ENCODE measurements at regions of chr1 and their contacts with region 1.

Region 1: DNA sequence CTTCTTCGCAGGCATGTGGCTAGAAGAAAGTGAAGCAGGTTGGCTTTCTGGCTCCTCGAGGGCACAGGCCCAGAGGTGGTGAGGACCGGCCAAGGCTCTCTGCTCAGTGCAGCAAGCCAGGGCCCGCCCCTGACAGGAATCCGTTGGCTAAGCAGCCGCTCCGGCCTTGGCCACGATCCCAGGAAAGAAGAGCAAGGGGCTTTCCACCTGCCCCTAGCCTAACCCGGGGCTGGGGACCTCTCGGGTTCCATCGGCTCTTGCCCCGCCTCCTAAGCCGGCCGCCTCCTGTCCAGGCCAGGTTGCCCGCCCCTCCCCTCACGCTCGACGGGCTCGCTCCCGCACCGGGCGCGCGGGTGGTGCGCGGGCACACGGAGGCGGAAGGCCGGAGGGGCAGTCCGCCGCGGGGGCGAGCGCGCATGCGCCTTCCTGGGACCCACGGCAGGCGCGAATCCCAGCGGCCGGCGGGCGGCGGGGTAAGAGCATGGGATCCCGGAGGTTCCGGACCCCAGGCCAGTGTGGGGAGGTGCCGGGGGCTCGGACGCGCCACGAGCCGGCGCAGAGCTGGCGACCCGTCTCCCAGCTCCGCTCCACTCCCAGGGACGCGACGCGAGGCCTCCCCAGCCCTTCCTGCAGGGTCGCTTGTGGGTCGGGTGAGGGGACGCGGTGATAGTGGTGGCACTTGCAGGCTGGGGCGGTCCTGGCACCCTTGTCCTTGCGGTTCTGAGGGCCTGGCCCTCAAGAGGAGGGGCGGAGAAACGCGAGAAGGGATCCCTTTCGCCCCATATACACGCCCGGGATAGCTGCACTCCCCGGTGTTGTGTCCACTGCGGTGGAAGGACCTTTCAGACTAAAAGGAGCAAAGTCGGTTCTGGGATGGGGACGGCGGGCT is at the start of gene ALG6:
- DNase-seq: peak; percentile 95
- H3K4me3 ChIP-seq: peak within 1 kb of the TSS; percentile 29 to 92 (median 65)
- H3K27ac ChIP-seq: no peak within 1 kb of the TSS
- H3K4me1 ChIP-seq: peaks cover 10% of the 10 kb centered on the region
- H3K27me3 ChIP-seq: no peaks in the 10 kb centered on the region
- CTCF ChIP-seq: no peak
- POLR2A ChIP-seq: peak; percentile 88
- total RNA-seq, gene ALG6: 14.4 and 17.3 TPM in 2 replicates

Region 2: GRCh38 chr1:63522891-63523728 is 155.7 kb after region 1 on chr1 and contains the starts of genes EFCAB7 and ITGB3BP:
- CTCF ChIA-PET with region 1: no interaction called
- POLR2A ChIA-PET with region 1: no interaction called
- dilution Hi-C with region 1: no loop called
- intact Hi-C with region 1: loop called (anchors 1 kb)
- DNase-seq: peak; percentile 91
- H3K4me3 ChIP-seq: peak within 1 kb of the TSS; percentile 55 to 95 (median 75)
- H3K27ac ChIP-seq: peak within 1 kb of the TSS; percentile 82
- H3K4me1 ChIP-seq: peaks cover 13% of the 10 kb centered on the region
- H3K27me3 ChIP-seq: no peaks in the 10 kb centered on the region
- CTCF ChIP-seq: no peak
- POLR2A ChIP-seq: peak; percentile 72
- total RNA-seq, gene EFCAB7: 6.1 and 7.1 TPM in 2 replicates
- total RNA-seq, gene ITGB3BP: 24.4 and 26.6 TPM in 2 replicates

Region 3: GRCh38 chr1:63615768-63616420 is 248.4 kb after region 1 on chr1:
- CTCF ChIA-PET with region 1: no interaction called
- POLR2A ChIA-PET with region 1: no interaction called
- dilution Hi-C with region 1: no loop called
- intact Hi-C with region 1: no loop called
- DNase-seq: peak; percentile 82
- H3K4me3 ChIP-seq: no peak overlapping the region
- H3K27ac ChIP-seq: no peak overlapping the region
- H3K4me1 ChIP-seq: no peaks in the 10 kb centered on the region
- H3K27me3 ChIP-seq: no peaks in the 10 kb centered on the region
- CTCF ChIP-seq: peak; percentile 50 to 59
- POLR2A ChIP-seq: no peak